ENCODE measurements at regions of chr7 and their contacts with region 1.

Region 1: GRCh38 chr7:27834179-27834921 is 94.4 kb downstream of the TAX1BP1 start:
- DNase-seq: no peak
- H3K4me3 ChIP-seq: no peak overlapping the region
- H3K27ac ChIP-seq: no peak overlapping the region
- H3K4me1 ChIP-seq: no peaks in the 10 kb centered on the region
- H3K27me3 ChIP-seq: no peaks in the 10 kb centered on the region
- CTCF ChIP-seq: no peak

Region 2: GRCh38 chr7:27952456-27953285 is 118.3 kb after region 1 on chr7:
- CTCF ChIA-PET with region 1: no interaction called
- POLR2A ChIA-PET with region 1: interaction called, 24 read pairs
- intact Hi-C with region 1: no loop called
- DNase-seq: no peak
- H3K4me3 ChIP-seq: no peak overlapping the region
- H3K27ac ChIP-seq: no peak overlapping the region
- H3K4me1 ChIP-seq: no peaks in the 10 kb centered on the region
- H3K27me3 ChIP-seq: no peaks in the 10 kb centered on the region
- CTCF ChIP-seq: no peak